Mammary epithelial cell (primary cell): ENCODE measurements at regions of chr12 and their contacts with region 1.

Region 1: DNA sequence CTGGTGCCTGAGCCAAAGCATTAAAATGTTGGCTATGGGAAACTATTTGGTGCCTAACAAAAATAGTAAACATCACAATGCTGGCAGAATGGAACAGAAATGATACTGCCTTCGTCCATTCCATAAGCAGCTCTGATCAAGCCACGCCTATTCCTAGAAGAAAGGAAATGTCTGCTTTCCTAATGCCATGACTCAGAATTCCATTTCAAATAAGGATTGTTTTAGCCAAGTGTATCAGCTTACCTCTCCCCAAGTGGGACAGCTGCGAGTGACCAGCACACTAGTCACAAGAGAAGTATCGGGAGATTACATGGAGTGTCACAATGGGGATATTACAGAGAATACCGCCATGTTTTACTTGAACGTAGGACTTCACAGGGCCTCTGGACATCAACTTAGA is 38.7 kb downstream of the GLT8D2 start:
- DNase-seq: peak; percentile 88
- H3K4me3 ChIP-seq: no peak overlapping the region
- H3K27ac ChIP-seq: peak overlapping the region; percentile 55
- H3K4me1 ChIP-seq: peaks cover 21% of the 10 kb centered on the region
- H3K27me3 ChIP-seq: no peaks in the 10 kb centered on the region
- CTCF ChIP-seq: no peak

Region 2: DNA sequence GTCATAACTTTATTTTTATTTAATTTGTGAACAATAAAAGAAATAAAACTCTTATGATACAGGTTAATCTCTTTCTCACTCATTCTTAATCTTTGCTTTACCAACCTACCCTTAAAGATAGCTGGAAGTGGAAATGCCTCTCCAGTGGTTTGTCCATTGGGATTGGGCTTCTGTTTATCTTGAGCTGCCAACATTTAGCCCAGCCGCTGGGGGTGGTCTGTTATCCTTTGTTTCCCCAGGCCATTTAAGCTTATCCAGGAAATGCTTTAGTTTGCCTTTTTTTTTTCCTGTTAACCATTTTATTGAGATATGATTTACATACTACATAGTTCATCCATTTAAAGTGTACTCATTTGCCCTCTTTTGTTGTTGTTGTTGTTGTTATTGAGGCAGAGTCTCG is 37.4 kb before region 1 on chr12:
- CTCF ChIA-PET with region 1: no interaction called
- dilution Hi-C with region 1: loop called (anchors 5 kb)
- in situ Hi-C with region 1: no loop called
- intact Hi-C with region 1: no loop called
- DNase-seq: no peak
- H3K4me3 ChIP-seq: no peak overlapping the region
- H3K27ac ChIP-seq: no peak overlapping the region
- H3K4me1 ChIP-seq: peaks cover 9% of the 10 kb centered on the region
- H3K27me3 ChIP-seq: no peaks in the 10 kb centered on the region
- CTCF ChIP-seq: no peak

Region 3: GRCh38 chr12:104049903-104050356 is 38.7 kb after region 1 on chr12 and contains the start of gene GLT8D2:
- CTCF ChIA-PET with region 1: no interaction called
- dilution Hi-C with region 1: no loop called
- in situ Hi-C with region 1: no loop called
- intact Hi-C with region 1: loop called (anchors 1 kb)
- DNase-seq: peak; percentile 57
- H3K4me3 ChIP-seq: peak within 1 kb of the TSS; percentile 48 to 60 (median 53)
- H3K27ac ChIP-seq: peak within 1 kb of the TSS; percentile 47
- H3K4me1 ChIP-seq: peaks cover 22% of the 10 kb centered on the region
- H3K27me3 ChIP-seq: no peaks in the 10 kb centered on the region
- CTCF ChIP-seq: no peak
- total RNA-seq, gene GLT8D2: 20.0 to 20.1 TPM